Stomach (tissue), 19 donors: ENCODE measurements at regions of chr22 and their contacts with region 1.

Region 1: GRCh38 chr22:43273902-43274484 is 69.2 kb downstream of the SCUBE1 start:
- DNase-seq: peak; percentile 47 to 83
- H3K4me3 ChIP-seq: no peak overlapping the region
- H3K27ac ChIP-seq: no peak overlapping the region
- H3K4me1 ChIP-seq: peaks cover 0 to 23% (median 3%) of the 10 kb centered on the region in 4 donors
- H3K27me3 ChIP-seq: peaks cover 0 to 8% (median 6%) of the 10 kb centered on the region in 3 donors
- CTCF ChIP-seq: peak in 5 of 7 experiments; percentile 35 to 91 (median 72)
- EP300 ChIP-seq: no peak
- POLR2A ChIP-seq: no peak

Region 2: DNA sequence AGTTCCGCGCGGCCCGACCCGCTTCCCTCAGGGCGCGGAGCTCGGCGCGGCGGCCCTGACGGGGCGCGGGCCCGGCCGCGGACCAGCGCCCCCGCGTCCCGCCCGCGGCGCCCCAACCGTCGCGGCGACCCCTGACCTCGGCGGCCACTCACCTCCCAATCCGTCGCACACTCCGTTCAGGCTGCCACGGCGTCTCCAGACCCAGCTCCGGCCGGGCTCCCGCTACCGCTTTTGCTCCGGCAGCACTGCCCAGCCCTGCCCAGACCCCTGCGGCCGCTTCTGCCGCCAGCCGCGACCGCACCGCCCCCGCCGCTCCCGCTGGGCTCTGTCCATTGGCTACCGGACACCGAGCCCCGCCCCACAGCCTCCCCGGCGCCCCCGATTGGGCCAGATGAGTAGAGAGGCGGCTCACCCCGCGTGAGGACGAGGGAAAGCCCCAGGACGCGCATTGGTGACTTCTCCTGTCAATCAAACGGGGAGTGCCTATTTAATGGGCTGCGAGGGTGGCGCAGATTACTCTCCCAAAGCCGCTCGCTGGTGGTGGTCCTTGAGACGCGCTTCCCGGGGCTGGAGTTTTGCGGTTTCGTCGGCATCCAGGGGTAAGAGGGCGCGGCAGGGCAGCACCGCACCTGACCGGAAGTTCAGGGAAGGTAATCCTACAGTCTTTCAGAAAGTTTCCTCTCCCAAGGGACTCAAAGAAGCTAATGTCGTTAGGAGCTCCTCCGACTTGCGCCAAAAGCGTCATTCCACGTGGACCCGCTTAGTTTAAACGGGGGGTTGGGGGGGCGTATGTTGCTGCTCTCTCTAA is 258.9 kb before region 1 on chr22 and contains the start of gene PACSIN2:
- intact Hi-C with region 1: no loop called
- DNase-seq: peak; percentile 99 to 100
- H3K4me3 ChIP-seq: peak within 1 kb of the TSS; percentile 87 to 99 (median 96)
- H3K27ac ChIP-seq: peak within 1 kb of the TSS; percentile 85 to 95 (median 86)
- H3K4me1 ChIP-seq: peaks cover 16 to 63% (median 49%) of the 10 kb centered on the region in 4 donors
- H3K27me3 ChIP-seq: no peaks in the 10 kb centered on the region
- CTCF ChIP-seq: no peak
- EP300 ChIP-seq: no peak
- POLR2A ChIP-seq: peak in 2 of 4 donors; percentile 71 to 77
- total RNA-seq, gene PACSIN2: 69.8 to 154 (median 87.9) TPM

Region 3: GRCh38 chr22:43346521-43346929 is 72.5 kb after region 1 on chr22:
- intact Hi-C with region 1: loop called (anchors 5 kb)
- DNase-seq: peak; percentile 66 to 76
- H3K4me3 ChIP-seq: no peak overlapping the region
- H3K27ac ChIP-seq: no peak overlapping the region
- H3K4me1 ChIP-seq: peaks cover 17 to 43% (median 20%) of the 10 kb centered on the region in 4 donors
- H3K27me3 ChIP-seq: peaks cover 12 to 80% (median 38%) of the 10 kb centered on the region in 3 donors
- CTCF ChIP-seq: peak in 5 of 7 experiments; percentile 25 to 67 (median 52)
- EP300 ChIP-seq: no peak
- POLR2A ChIP-seq: no peak

Region 4: GRCh38 chr22:43385770-43386641 is 112.0 kb after region 1 on chr22:
- intact Hi-C with region 1: loop called (anchors 10 kb)
- DNase-seq: peak; percentile 81 to 95
- H3K4me3 ChIP-seq: no peak overlapping the region
- H3K27ac ChIP-seq: no peak overlapping the region
- H3K4me1 ChIP-seq: peaks cover 0 to 17% (median 9%) of the 10 kb centered on the region in 4 donors
- H3K27me3 ChIP-seq: peaks cover 0 to 27% (median 8%) of the 10 kb centered on the region in 3 donors
- CTCF ChIP-seq: peak in 5 of 7 experiments; percentile 84 to 90 (median 86)
- EP300 ChIP-seq: no peak
- POLR2A ChIP-seq: no peak